H1 (cell line): ENCODE measurements at regions of chr15 and their contacts with region 1.

Region 1: GRCh38 chr15:75921729-75922703 is 18.3 kb downstream of the FBXO22 start:
- DNase-seq: no peak
- H3K4me3 ChIP-seq: no peak overlapping the region
- H3K27ac ChIP-seq: no peak overlapping the region
- H3K4me1 ChIP-seq: peaks cover 0 to 8% (median 1%) of the 10 kb centered on the region in 4 experiments; a peak in 1 of 7 replicates
- H3K27me3 ChIP-seq: no peaks in the 10 kb centered on the region
- CTCF ChIP-seq: peak in 2 of 3 experiments; percentile 56 to 60; a peak in 3 of 4 replicates
- EP300 ChIP-seq: no peak
- POLR2A ChIP-seq: no peak
- RAD21 ChIP-seq: peak; percentile 80 to 84

Region 2: GRCh38 chr15:75542386-75542797 is 379.6 kb before region 1 on chr15:
- CTCF ChIA-PET with region 1: no interaction called
- POLR2A ChIA-PET with region 1: no interaction called
- DNase-seq: no peak
- H3K4me3 ChIP-seq: no peak overlapping the region
- H3K27ac ChIP-seq: no peak overlapping the region
- H3K4me1 ChIP-seq: no peaks in the 10 kb centered on the region
- H3K27me3 ChIP-seq: no peaks in the 10 kb centered on the region
- CTCF ChIP-seq: no peak
- EP300 ChIP-seq: no peak
- POLR2A ChIP-seq: no peak
- RAD21 ChIP-seq: no peak

Region 3: GRCh38 chr15:75903331-75904239 is 18.4 kb before region 1 on chr15 and contains the start of gene FBXO22:
- CTCF ChIA-PET with region 1: interaction called, 21 read pairs
- POLR2A ChIA-PET with region 1: interaction called, 9 read pairs
- DNase-seq: peak; percentile 71 to 93
- H3K4me3 ChIP-seq: peak within 1 kb of the TSS; percentile 86 to 93 (median 90)
- H3K27ac ChIP-seq: peak within 1 kb of the TSS; percentile 96
- H3K4me1 ChIP-seq: peaks cover 8 to 22% (median 13%) of the 10 kb centered on the region in 4 experiments; a peak in 5 of 7 replicates
- H3K27me3 ChIP-seq: no peaks in the 10 kb centered on the region
- CTCF ChIP-seq: no peak
- EP300 ChIP-seq: peak in 1 of 2 experiments; percentile 41; a peak in 1 of 3 replicates
- POLR2A ChIP-seq: peak; percentile 87 to 89
- RAD21 ChIP-seq: peak in 1 of 2 experiments; percentile 3; a peak in 2 of 4 replicates
- total RNA-seq, gene FBXO22: 66.8 and 67.3 TPM in 2 replicates